MCF 10A (cell line): ENCODE measurements at regions of chr1 and their contacts with region 1.

Region 1: GRCh38 chr1:240803151-240803550 is 191.2 kb upstream of the GREM2 start:
- DNase-seq: peak; percentile 96
- H3K4me3 Mint-ChIP-seq: no peak overlapping the region
- H3K27ac Mint-ChIP-seq: peak overlapping the region; percentile 77
- H3K4me1 Mint-ChIP-seq: peaks cover 34% of the 10 kb centered on the region
- H3K27me3 Mint-ChIP-seq: no peaks in the 10 kb centered on the region
- CTCF ChIP-seq: no peak

Region 2: DNA sequence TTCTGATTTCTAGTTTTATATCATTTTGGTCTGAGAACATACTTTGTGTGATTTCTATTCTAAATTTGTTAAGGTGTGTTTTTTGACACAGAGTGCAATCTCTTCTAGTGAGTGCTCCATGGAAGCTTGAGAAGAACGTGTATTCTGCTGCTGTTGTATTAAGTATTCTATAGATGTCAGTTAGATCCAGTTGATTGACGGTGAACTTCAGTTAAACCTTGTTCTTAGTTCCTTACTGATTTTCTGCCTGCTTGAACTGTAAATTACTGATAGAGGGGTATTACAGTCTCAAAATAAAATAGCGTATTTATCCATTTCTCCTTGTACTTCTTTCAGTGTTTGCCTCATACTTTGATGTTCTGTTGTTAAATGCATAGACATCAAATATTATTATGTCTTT is 56.9 kb after region 1 on chr1:
- CTCF ChIA-PET with region 1: no interaction called
- POLR2A ChIA-PET with region 1: no interaction called
- intact Hi-C with region 1: no loop called
- DNase-seq: no peak
- H3K4me3 Mint-ChIP-seq: no peak overlapping the region
- H3K27ac Mint-ChIP-seq: no peak overlapping the region
- H3K4me1 Mint-ChIP-seq: no peaks in the 10 kb centered on the region
- H3K27me3 Mint-ChIP-seq: no peaks in the 10 kb centered on the region
- CTCF ChIP-seq: no peak

Region 3: GRCh38 chr1:241475671-241476070 is 672.5 kb after region 1 on chr1:
- CTCF ChIA-PET with region 1: no interaction called
- POLR2A ChIA-PET with region 1: no interaction called
- intact Hi-C with region 1: no loop called
- DNase-seq: no peak
- H3K4me3 Mint-ChIP-seq: no peak overlapping the region
- H3K27ac Mint-ChIP-seq: no peak overlapping the region
- H3K4me1 Mint-ChIP-seq: no peaks in the 10 kb centered on the region
- H3K27me3 Mint-ChIP-seq: no peaks in the 10 kb centered on the region
- CTCF ChIP-seq: no peak

Region 4: DNA sequence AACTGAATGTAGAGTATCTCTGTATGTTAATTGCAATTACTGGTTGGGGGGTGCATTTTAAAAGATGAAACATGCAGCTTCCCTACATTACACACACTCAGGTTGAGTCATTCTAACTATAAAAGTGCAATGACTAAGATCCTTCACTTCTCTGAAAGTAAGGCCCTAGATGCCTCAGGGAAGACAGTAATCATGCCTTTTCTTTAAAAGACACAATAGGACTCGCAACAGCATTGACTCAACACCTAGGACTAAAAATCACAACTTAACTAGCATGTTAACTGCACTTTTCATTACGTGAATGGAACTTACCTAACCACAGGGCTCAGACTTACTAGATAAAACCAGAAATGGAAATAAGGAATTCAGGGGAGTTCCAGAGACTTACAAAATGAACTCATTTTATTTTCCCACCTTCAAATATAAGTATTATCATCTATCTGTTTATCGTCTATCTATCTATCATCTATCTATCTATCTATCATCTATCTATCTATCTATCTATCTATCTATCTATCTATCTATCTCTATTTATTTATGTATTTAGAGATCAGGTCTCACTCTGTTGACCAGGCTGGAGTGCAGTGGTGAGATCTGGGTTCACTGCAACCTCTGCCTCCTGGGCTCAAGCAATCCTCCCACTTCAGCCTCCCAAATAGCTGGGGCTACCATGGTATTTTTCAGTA is 789.3 kb after region 1 on chr1:
- CTCF ChIA-PET with region 1: no interaction called
- POLR2A ChIA-PET with region 1: no interaction called
- intact Hi-C with region 1: loop called (anchors 10 kb)
- DNase-seq: peak; percentile 98
- H3K4me3 Mint-ChIP-seq: peak overlapping the region; percentile 7
- H3K27ac Mint-ChIP-seq: peak overlapping the region; percentile 76
- H3K4me1 Mint-ChIP-seq: peaks cover 39% of the 10 kb centered on the region
- H3K27me3 Mint-ChIP-seq: no peaks in the 10 kb centered on the region
- CTCF ChIP-seq: no peak